B cell (primary cell): ENCODE measurements at regions of chr4 and their contacts with region 1.

Region 1: GRCh38 chr4:13627606-13628301 is at the start of gene BOD1L1:
- DNase-seq: peak; percentile 94
- ATAC-seq: peak; percentile 89
- H3K4me3 ChIP-seq: peak within 1 kb of the TSS; percentile 76 to 99 (median 88)
- H3K4me3 Mint-ChIP-seq: peak within 1 kb of the TSS; percentile 92
- H3K27ac ChIP-seq: peak within 1 kb of the TSS; percentile 97 to 98
- H3K27ac Mint-ChIP-seq: peak within 1 kb of the TSS; percentile 95
- H3K4me1 ChIP-seq: peaks cover 34% of the 10 kb centered on the region in 2 donors
- H3K4me1 Mint-ChIP-seq: peaks cover 52% of the 10 kb centered on the region
- H3K27me3 ChIP-seq: no peaks in the 10 kb centered on the region
- H3K27me3 Mint-ChIP-seq: no peaks in the 10 kb centered on the region
- CTCF ChIP-seq: peak; percentile 54
- total RNA-seq, gene BOD1L1: 107 and 109 TPM in 2 replicates

Region 2: DNA sequence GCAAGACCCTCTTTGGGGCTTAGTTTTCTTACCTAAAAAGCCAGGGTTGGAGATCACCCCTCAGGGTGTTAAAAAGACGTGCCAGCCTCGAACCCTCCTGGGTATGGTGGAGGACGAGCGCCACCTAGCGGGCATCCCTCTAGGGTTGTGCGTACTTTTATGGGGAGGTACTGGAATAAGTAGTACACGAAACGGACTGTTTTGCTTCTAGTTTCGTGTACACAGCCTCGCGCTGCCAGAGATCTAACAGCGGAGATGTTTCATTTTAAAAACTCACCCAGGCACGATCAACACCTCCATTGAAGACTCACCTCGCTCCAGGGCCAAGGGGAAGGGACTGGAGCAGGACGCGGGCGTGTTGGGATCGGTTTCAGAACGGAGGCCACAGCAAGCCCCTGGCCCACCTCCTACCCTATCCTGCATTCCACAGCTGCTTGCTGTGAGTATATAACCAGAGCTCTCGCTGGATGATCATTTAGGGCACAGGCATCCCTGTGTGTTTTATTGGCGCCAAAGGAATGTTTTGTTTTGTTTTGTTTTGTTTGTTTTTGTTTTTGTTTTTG is 78.7 kb before region 1 on chr4:
- CTCF ChIA-PET with region 1: interaction called, 3 read pairs
- POLR2A ChIA-PET with region 1: no interaction called
- intact Hi-C with region 1: loop called (anchors 5 kb)
- DNase-seq: peak; percentile 86
- ATAC-seq: peak; percentile 65
- H3K4me3 ChIP-seq: peak overlapping the region; percentile 3 to 41 (median 31)
- H3K4me3 Mint-ChIP-seq: peak overlapping the region; percentile 77
- H3K27ac ChIP-seq: no peak overlapping the region
- H3K27ac Mint-ChIP-seq: peak overlapping the region; percentile 55
- H3K4me1 ChIP-seq: peaks cover 40 to 44% of the 10 kb centered on the region in 2 donors
- H3K4me1 Mint-ChIP-seq: peaks cover 31% of the 10 kb centered on the region
- H3K27me3 ChIP-seq: peaks cover 2 to 59% (median 47%) of the 10 kb centered on the region in 4 experiments
- H3K27me3 Mint-ChIP-seq: peaks cover 65% of the 10 kb centered on the region
- CTCF ChIP-seq: peak; percentile 89

Region 3: GRCh38 chr4:13601048-13601447 is 26.7 kb before region 1 on chr4:
- CTCF ChIA-PET with region 1: no interaction called
- POLR2A ChIA-PET with region 1: no interaction called
- intact Hi-C with region 1: loop called (anchors 1 kb)
- DNase-seq: peak; percentile 75
- ATAC-seq: peak; percentile 92
- H3K4me3 ChIP-seq: peak overlapping the region in 1 of 5 experiments; percentile 3
- H3K4me3 Mint-ChIP-seq: peak overlapping the region; percentile 57
- H3K27ac ChIP-seq: peak overlapping the region; percentile 50 to 79
- H3K27ac Mint-ChIP-seq: peak overlapping the region; percentile 76
- H3K4me1 ChIP-seq: peaks cover 31 to 33% of the 10 kb centered on the region in 2 donors
- H3K4me1 Mint-ChIP-seq: peaks cover 40% of the 10 kb centered on the region
- H3K27me3 ChIP-seq: no peaks in the 10 kb centered on the region
- H3K27me3 Mint-ChIP-seq: no peaks in the 10 kb centered on the region
- CTCF ChIP-seq: no peak

Region 4: DNA sequence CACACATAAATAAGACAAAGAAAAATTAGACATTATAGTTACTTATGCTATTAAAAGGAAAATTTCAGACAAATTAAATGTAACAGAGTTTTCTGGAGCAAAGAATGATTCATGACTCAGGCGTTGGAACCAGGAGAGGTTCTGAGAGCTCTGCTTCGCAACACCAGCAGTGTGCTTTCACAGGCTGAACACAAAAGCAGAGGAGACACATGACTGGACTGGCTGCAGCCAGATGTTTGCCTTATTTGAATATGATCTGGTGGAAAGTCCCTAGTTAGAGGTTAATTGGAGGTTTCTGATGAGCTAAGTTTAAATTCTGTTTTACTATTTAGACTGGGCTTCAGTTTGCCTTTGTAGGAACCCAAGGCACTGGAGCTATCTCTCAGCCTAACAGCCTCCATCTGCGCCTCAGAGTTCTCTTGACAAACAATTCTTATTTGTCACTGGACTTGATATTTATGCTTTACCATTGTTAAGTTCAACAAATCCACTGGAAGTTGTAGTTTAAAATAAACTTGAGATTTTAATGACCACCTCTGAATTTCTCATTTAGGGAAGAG is 16.4 kb before region 1 on chr4:
- CTCF ChIA-PET with region 1: interaction called, 10 read pairs
- POLR2A ChIA-PET with region 1: interaction called, 7 read pairs
- intact Hi-C with region 1: loop called (anchors 1 kb)
- DNase-seq: peak; percentile 83
- ATAC-seq: peak; percentile 92
- H3K4me3 ChIP-seq: peak overlapping the region in 1 of 5 experiments; percentile 47
- H3K4me3 Mint-ChIP-seq: peak overlapping the region; percentile 71
- H3K27ac ChIP-seq: peak overlapping the region; percentile 84 to 92
- H3K27ac Mint-ChIP-seq: peak overlapping the region; percentile 88
- H3K4me1 ChIP-seq: peaks cover 48 to 55% of the 10 kb centered on the region in 2 donors
- H3K4me1 Mint-ChIP-seq: peaks cover 54% of the 10 kb centered on the region
- H3K27me3 ChIP-seq: no peaks in the 10 kb centered on the region
- H3K27me3 Mint-ChIP-seq: no peaks in the 10 kb centered on the region
- CTCF ChIP-seq: no peak